Sciatic nerve (tissue), 2 donors: ENCODE measurements at regions of chr11 and their contacts with region 1.

Region 1: DNA sequence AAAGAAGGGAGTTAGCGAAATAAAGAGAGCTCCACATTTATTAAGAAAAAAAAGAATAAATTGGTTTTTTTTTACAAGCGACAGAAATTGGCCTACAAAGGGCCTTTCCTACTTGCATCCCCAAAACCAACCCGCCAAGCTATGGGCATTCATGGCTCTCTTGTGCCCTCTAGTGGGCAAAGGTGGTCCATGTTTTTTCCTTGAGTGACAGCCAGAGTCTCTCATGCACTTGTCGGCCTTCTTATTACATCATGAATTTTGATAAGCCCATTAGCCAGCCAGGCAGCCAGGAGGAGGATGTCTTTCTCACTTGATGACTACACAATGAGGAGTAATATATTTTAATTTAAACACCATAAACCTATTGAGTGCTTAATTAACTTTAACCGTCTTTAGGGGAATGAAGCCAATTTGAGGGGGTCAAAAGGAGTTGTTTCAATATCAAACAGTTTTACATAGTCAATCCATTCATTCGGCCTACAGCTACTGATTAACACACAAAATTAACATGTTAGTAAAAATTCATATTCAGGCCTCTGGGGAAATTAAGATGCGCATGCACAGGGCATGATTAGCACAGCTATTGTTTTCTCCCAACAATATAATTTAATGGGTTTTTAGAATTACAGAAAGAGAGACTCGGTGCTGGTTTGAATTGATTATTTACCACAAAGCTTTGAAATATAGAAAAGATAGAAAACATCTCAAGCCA is 85.5 kb downstream of the RCN1 start:
- DNase-seq: peak; percentile 88
- ATAC-seq: peak; percentile 71

Region 2: GRCh38 chr11:31236143-31236542 is 940.2 kb before region 1 on chr11:
- intact Hi-C with region 1: loop called (anchors 10 kb)
- DNase-seq: no peak
- ATAC-seq: no peak

Region 3: GRCh38 chr11:32511926-32512325 is 335.5 kb after region 1 on chr11:
- intact Hi-C with region 1: no loop called
- DNase-seq: no peak
- ATAC-seq: no peak